ENCODE measurements at regions of chr10 and their contacts with region 1.

Region 1: GRCh38 chr10:4767033-4767814 is 58.8 kb upstream of the AKR1E2 start:
- DNase-seq: peak; percentile 25
- H3K4me3 ChIP-seq: no peak overlapping the region
- H3K27ac ChIP-seq: no peak overlapping the region
- H3K4me1 ChIP-seq: no peaks in the 10 kb centered on the region
- H3K27me3 ChIP-seq: no peaks in the 10 kb centered on the region
- CTCF ChIP-seq: peak; percentile 26 to 79 (median 74)
- POLR2A ChIP-seq: no peak

Region 2: DNA sequence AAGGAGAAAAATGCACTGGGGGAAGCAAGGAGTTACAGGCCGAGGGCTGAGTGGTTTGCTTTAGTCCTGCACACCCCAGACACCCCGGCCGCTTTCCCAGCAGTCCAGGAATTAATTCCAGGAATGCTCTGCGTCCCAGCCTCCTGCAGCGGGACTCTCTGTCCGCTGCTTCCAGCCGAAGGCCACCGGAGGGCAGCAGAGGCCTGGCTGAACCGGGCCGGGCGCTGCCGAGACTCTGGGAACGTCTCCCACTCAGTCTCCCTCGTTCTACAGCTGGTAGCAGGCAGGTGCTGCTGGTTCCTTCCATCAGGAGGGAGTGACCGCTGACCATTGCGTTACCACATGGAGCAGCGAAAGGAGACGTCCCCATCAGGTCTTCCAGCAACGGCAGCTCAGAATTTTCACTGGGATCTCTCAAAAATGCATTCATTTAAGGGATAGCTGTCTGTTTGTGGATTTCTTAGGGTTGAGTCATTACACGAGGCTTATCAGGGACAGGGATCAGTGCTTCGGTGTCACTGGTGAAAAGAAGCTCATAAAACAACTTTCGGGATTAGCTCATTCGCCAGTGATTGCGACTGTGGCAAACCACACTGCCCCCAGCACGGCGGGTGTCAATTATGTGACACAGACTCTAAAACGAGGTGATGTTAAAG is 1569.7 kb before region 1 on chr10:
- intact Hi-C with region 1: loop called (anchors 5 kb)
- DNase-seq: peak; percentile 74
- H3K4me3 ChIP-seq: no peak overlapping the region
- H3K27ac ChIP-seq: no peak overlapping the region
- H3K4me1 ChIP-seq: no peaks in the 10 kb centered on the region
- H3K27me3 ChIP-seq: no peaks in the 10 kb centered on the region
- CTCF ChIP-seq: peak; percentile 66 to 92 (median 82)
- POLR2A ChIP-seq: no peak

Region 3: DNA sequence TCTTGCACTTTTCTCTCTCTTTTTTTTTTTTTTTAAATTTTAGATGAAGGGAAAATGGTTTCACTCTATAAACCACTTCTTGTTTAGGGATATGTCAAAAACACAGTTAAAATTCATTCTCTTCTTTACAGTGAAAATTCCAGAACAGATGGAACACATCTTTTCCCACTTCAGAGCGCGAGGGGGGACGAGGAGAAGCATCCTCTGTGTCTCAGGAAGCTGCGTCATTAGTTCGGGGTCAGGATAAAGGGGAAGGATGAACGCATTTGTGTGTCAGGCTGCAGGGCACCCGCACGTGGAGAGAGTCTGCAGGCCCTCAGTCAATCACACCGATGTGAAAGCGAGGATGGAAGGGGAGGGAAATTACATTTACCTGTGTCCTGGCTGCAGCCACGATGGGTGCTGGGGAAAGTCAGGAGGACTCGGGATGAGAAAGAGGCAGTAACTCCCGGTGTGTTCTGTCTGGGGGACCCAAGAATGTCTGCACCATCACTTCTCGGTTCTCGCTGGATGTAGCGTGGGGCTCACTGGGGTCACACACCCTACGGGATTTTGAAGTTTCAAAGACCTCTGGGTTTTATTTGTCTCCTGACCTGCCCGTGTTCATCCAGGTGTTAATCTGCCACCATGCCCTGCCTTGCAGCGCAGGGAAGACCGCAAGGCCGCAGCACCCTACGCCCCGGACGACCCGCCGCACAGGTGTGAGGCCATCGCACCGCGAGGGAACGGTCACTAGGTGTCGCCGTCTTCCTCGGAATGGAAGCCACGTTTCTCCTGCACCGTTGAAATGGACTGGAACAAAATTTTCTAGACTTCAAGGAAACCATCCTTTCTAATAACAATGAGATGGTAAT is 1527.9 kb before region 1 on chr10:
- intact Hi-C with region 1: loop called (anchors 5 kb)
- DNase-seq: peak; percentile 61
- H3K4me3 ChIP-seq: no peak overlapping the region
- H3K27ac ChIP-seq: no peak overlapping the region
- H3K4me1 ChIP-seq: no peaks in the 10 kb centered on the region
- H3K27me3 ChIP-seq: no peaks in the 10 kb centered on the region
- CTCF ChIP-seq: peak; percentile 72 to 86 (median 84)
- POLR2A ChIP-seq: no peak

Region 4: DNA sequence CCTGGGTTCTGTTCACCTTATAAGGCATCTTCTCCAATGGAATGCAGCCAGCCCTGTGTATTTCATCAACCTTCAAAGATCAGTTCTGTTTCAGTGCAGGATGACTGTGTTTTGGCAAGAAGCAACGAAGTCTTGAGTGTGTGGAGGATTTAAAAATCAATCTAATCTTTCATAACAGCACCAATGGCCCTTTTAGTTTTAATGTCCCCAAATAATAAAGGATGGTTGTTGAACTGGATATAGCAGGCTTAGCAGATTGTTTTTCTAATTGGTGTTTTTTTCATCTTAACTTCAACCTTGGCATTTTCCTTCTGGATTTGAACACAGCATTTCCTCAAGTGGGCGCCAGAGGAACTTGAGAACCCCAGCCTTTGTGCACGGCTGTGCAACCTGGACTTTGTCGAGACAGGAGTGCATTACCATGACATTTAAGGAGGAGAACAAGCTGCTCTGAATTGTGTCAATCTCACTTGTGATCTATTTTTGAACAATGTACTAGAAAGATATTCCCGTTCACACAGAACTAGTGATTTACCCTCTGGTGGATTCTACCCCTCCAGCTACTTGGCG is 254.5 kb before region 1 on chr10:
- intact Hi-C with region 1: loop called (anchors 10 kb)
- DNase-seq: peak; percentile 49
- H3K4me3 ChIP-seq: no peak overlapping the region
- H3K27ac ChIP-seq: no peak overlapping the region
- H3K4me1 ChIP-seq: no peaks in the 10 kb centered on the region
- H3K27me3 ChIP-seq: no peaks in the 10 kb centered on the region
- CTCF ChIP-seq: peak in 3 of 4 experiments; percentile 38 to 55 (median 50)
- POLR2A ChIP-seq: no peak

Region 5: GRCh38 chr10:4663162-4663904 is 103.9 kb before region 1 on chr10:
- intact Hi-C with region 1: loop called (anchors 5 kb)
- DNase-seq: peak; percentile 91
- H3K4me3 ChIP-seq: no peak overlapping the region
- H3K27ac ChIP-seq: peak overlapping the region; percentile 60 to 73
- H3K4me1 ChIP-seq: peaks cover 18% of the 10 kb centered on the region
- H3K27me3 ChIP-seq: no peaks in the 10 kb centered on the region
- CTCF ChIP-seq: no peak
- POLR2A ChIP-seq: peak; percentile 26